ENCODE measurements at regions of chr12 and their contacts with region 1.

Region 1: GRCh38 chr12:71663561-71664294 is at the start of gene ZFC3H1:
- DNase-seq: peak; percentile 93
- H3K4me3 Mint-ChIP-seq: peak within 1 kb of the TSS; percentile 93
- H3K27ac Mint-ChIP-seq: peak within 1 kb of the TSS; percentile 99
- H3K4me1 Mint-ChIP-seq: peaks cover 41% of the 10 kb centered on the region
- H3K27me3 Mint-ChIP-seq: no peaks in the 10 kb centered on the region
- total RNA-seq, gene ZFC3H1: 64.7 to 76.8 TPM

Region 2: GRCh38 chr12:71335151-71335962 is 328.4 kb before region 1 on chr12:
- CTCF ChIA-PET with region 1: no interaction called
- POLR2A ChIA-PET with region 1: no interaction called
- DNase-seq: no peak
- H3K4me3 Mint-ChIP-seq: no peak overlapping the region
- H3K27ac Mint-ChIP-seq: no peak overlapping the region
- H3K4me1 Mint-ChIP-seq: no peaks in the 10 kb centered on the region
- H3K27me3 Mint-ChIP-seq: no peaks in the 10 kb centered on the region

Region 3: DNA sequence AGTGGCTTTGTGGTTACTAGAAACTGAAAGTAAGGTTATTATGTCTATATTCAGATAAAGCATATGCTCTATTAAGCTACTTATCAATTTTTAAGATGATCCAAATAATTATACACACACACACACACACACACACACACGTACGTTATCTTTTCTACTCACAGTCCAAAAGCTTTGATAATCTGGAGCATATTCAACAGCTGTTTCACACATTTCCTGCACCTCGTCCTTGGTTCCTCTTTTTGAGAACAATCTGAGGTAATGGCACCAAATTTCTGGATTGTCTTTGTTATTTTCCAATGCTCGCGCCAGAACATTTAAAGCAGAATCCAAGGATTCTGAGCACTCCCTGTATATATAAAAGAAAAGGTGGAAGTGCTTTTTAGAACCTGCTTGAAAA is 37.6 kb before region 1 on chr12:
- CTCF ChIA-PET with region 1: no interaction called
- POLR2A ChIA-PET with region 1: interaction called, 20 read pairs
- DNase-seq: no peak
- H3K4me3 Mint-ChIP-seq: no peak overlapping the region
- H3K27ac Mint-ChIP-seq: peak overlapping the region; percentile 37
- H3K4me1 Mint-ChIP-seq: peaks cover 20% of the 10 kb centered on the region
- H3K27me3 Mint-ChIP-seq: no peaks in the 10 kb centered on the region

Region 4: DNA sequence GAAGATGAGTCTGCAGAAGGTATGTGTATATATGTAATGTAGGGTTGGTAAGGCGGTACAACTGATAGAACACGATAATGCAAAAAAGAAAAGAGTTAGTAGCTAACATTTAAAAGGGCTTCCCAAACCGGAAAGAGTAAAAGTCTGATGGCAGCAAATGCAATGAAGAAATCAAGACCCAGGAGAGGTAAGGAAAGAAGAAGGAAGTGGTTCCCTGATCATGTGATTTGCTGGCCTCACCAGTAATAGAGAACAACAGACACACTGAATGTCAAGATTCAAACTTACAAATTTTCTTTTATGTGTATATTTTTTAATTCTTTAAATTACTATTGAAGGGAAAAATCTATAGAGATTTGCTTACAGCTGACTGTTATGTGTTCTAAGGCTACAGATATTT is 18.5 kb before region 1 on chr12:
- CTCF ChIA-PET with region 1: interaction called, 3 read pairs
- POLR2A ChIA-PET with region 1: interaction called, 21 read pairs
- DNase-seq: no peak
- H3K4me3 Mint-ChIP-seq: no peak overlapping the region
- H3K27ac Mint-ChIP-seq: peak overlapping the region; percentile 47
- H3K4me1 Mint-ChIP-seq: peaks cover 35% of the 10 kb centered on the region
- H3K27me3 Mint-ChIP-seq: no peaks in the 10 kb centered on the region

Region 5: GRCh38 chr12:71685914-71686665 is 22.4 kb after region 1 on chr12 and contains the start of gene TMEM19:
- CTCF ChIA-PET with region 1: interaction called, 46 read pairs
- POLR2A ChIA-PET with region 1: interaction called, 218 read pairs
- DNase-seq: peak; percentile 86
- H3K4me3 Mint-ChIP-seq: peak within 1 kb of the TSS; percentile 85
- H3K27ac Mint-ChIP-seq: peak within 1 kb of the TSS; percentile 91
- H3K4me1 Mint-ChIP-seq: peaks cover 36% of the 10 kb centered on the region
- H3K27me3 Mint-ChIP-seq: no peaks in the 10 kb centered on the region
- total RNA-seq, gene TMEM19: 15.5 to 16.1 TPM

Region 6: GRCh38 chr12:71754461-71755145 is 90.9 kb after region 1 on chr12 and contains the start of gene RAB21:
- CTCF ChIA-PET with region 1: interaction called, 6 read pairs
- POLR2A ChIA-PET with region 1: interaction called, 57 read pairs
- DNase-seq: peak; percentile 99
- H3K4me3 Mint-ChIP-seq: peak within 1 kb of the TSS; percentile 88
- H3K27ac Mint-ChIP-seq: peak within 1 kb of the TSS; percentile 90
- H3K4me1 Mint-ChIP-seq: peaks cover 31% of the 10 kb centered on the region
- H3K27me3 Mint-ChIP-seq: peaks cover 21% of the 10 kb centered on the region
- total RNA-seq, gene RAB21: 65.0 to 67.3 TPM

Measured in activated CD4-positive, alpha-beta memory T cell treated with anti-CD3 and anti-CD28 coated beads, Interleukin-2, amount 10 ng/mL, durations not matched to agents 7 days and 5 days (primary cell).